IMR-90 (cell line): ENCODE measurements at regions of chr4 and their contacts with region 1.

Region 1: GRCh38 chr4:148735432-148736155 is 293.4 kb upstream of the NR3C2 start:
- DNase-seq: no peak
- ATAC-seq: no peak
- H3K4me3 ChIP-seq: no peak overlapping the region
- H3K27ac ChIP-seq: no peak overlapping the region
- H3K4me1 ChIP-seq: no peaks in the 10 kb centered on the region; the same call in 1 of the 2 replicates
- H3K27me3 ChIP-seq: no peaks in the 10 kb centered on the region
- CTCF ChIP-seq: no peak
- POLR2A ChIP-seq: no peak
- RAD21 ChIP-seq: no peak

Region 2: DNA sequence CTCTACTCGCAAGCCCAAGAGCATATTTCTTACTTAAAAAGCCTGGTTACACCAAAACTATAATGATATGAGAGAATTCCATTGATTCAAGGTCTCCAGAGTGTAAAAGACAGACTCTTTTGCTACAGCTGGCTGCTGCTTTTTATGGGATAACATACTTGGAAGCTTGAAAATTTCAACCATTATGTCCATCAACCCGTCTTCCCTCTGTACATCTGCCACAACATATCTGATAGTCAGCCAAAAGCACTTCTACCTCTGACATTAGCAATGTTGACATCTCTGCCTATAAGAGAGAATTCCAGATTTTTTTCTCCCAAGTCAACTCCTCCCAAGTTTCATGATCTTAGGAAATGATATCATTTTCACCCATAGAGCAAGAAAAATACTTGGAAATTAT is 1134.4 kb after region 1 on chr4:
- CTCF ChIA-PET with region 1: no interaction called
- POLR2A ChIA-PET with region 1: no interaction called
- dilution Hi-C with region 1: no loop called
- in situ Hi-C with region 1: no loop called
- intact Hi-C with region 1: loop called (anchors 5 kb)
- DNase-seq: no peak
- ATAC-seq: no peak
- H3K4me3 ChIP-seq: no peak overlapping the region
- H3K27ac ChIP-seq: no peak overlapping the region
- H3K4me1 ChIP-seq: no peaks in the 10 kb centered on the region
- H3K27me3 ChIP-seq: no peaks in the 10 kb centered on the region
- CTCF ChIP-seq: no peak
- POLR2A ChIP-seq: no peak
- RAD21 ChIP-seq: no peak